Psoas muscle (tissue), 8 donors: ENCODE measurements at regions of chr7 and their contacts with region 1.

Region 1: DNA sequence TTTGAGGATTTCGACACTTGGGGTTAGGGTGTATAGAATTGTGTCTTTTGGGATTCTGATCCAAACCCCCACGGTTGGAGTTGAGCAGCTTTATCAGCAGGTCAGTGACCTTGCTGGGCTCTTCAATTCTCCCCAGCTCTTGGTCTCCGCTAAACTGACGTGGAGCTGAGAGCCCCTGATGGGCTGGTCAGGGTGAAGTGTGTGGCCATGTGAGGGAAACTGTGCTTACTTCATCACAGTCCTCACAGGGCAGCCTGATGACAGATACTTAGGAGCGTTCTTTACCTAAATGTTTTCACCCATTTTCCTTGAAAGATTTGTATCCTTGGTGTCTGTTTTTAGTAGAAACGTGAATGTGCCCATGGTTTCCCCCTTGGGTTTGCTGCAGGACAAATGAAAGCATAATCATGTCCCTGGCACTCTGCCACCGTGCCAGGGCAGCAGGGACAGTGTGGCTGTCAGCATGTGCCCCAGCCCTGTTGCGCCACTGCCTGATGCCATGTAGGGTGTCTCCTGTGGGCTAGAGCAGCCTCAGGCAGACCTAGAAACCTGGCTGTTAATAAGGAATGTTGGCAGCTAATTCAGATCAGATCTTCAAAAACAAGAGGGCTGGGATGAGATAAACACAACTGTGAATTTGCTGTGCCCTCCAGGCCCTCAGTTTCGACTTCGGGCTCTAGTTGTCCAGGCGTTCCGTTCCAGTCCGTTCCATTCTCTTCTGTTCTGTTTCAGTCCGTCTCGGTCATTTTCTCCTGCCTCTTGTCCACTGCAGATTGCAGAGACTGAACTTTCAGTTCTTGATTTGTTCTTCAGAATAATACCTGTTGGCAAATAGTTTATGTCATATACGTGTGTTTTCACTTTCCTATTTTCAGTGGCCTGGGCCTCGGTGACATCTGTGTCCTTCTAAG is 96.8 kb downstream of the TRRAP start:
- DNase-seq: peak; percentile 67 to 80
- ATAC-seq: peak; percentile 75 to 96 (median 94)
- H3K4me3 ChIP-seq: no peak overlapping the region
- H3K27ac ChIP-seq: no peak overlapping the region
- H3K4me1 ChIP-seq: no peaks in the 10 kb centered on the region
- H3K27me3 ChIP-seq: no peaks in the 10 kb centered on the region
- CTCF ChIP-seq: no peak

Region 2: DNA sequence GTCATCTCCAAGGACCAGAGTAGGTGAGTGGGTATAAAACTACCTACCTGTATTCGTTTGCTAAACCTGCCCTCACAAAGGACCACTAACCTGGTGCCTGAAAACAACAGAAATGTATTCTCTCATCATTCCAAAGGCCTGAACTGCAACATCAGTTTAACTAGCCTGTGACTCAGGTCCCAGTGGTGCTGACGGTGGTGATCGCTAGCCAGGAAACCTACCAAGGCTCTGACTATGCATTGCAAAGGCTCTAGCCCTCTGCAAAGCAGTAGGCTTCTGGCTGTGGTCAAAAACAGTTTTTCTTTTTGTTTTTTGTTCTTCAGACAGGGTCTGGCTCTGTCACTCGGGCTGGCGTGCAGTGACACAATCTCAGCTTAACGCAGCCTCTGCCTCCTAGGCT is 250.6 kb before region 1 on chr7:
- intact Hi-C with region 1: no loop called
- DNase-seq: no peak
- ATAC-seq: no peak
- H3K4me3 ChIP-seq: no peak overlapping the region
- H3K27ac ChIP-seq: no peak overlapping the region
- H3K4me1 ChIP-seq: no peaks in the 10 kb centered on the region
- H3K27me3 ChIP-seq: peaks cover 0 to 1% (median under 1%) of the 10 kb centered on the region in 3 donors
- CTCF ChIP-seq: no peak

Region 3: GRCh38 chr7:98935811-98936210 is 39.4 kb before region 1 on chr7:
- intact Hi-C with region 1: loop called in 1 of 2 experiments (anchors 5 kb)
- DNase-seq: no peak
- ATAC-seq: peak; percentile 42 to 76 (median 72)
- H3K4me3 ChIP-seq: no peak overlapping the region
- H3K27ac ChIP-seq: peak overlapping the region; percentile 33
- H3K4me1 ChIP-seq: peaks cover 4% of the 10 kb centered on the region
- H3K27me3 ChIP-seq: no peaks in the 10 kb centered on the region
- CTCF ChIP-seq: no peak

Region 4: DNA sequence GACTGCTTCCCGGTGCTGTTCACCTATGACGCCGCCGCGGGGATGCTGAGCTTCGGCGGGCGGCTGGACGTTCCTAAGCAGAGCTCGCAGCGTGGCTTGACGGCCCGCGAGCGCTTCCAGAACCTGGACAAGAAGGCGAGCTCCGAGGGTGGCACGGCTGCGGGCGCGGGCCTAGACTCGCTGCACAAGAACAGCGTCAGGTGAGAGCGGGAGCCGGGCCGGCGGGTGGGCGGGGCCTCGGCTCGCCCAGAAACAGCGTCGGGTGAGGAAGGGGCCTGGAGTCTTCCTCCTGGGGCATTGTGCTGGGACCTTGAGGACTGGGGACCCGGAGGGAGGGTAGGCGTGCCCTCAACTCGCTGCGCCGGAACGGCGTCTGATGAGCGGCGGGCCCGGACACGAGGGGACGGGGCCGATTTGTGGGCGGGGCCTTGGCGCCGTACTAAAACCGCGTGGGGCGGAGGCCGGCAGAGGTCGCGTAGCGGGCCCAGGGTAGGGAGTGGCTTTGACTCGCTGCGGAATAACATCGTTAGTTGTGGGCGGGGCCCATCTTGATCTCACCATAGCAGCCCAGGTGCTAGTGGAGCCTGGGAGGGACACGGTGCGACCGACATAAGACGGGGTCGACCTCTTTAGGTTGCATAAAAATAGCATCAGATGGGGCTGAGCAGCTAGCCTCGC is 417.7 kb after region 1 on chr7:
- intact Hi-C with region 1: no loop called
- DNase-seq: peak; percentile 81 to 90
- ATAC-seq: peak; percentile 82 to 90 (median 88)
- H3K4me3 ChIP-seq: peak overlapping the region; percentile 75
- H3K27ac ChIP-seq: peak overlapping the region; percentile 48
- H3K4me1 ChIP-seq: peaks cover 10% of the 10 kb centered on the region
- H3K27me3 ChIP-seq: no peaks in the 10 kb centered on the region
- CTCF ChIP-seq: no peak

Region 5: GRCh38 chr7:99558306-99559174 is 583.4 kb after region 1 on chr7 and contains the start of gene ZNF655:
- intact Hi-C with region 1: no loop called
- DNase-seq: peak; percentile 94 to 96
- ATAC-seq: peak; percentile 92 to 96 (median 95)
- H3K4me3 ChIP-seq: peak within 1 kb of the TSS; percentile 78
- H3K27ac ChIP-seq: peak within 1 kb of the TSS; percentile 95
- H3K4me1 ChIP-seq: peaks cover 55% of the 10 kb centered on the region
- H3K27me3 ChIP-seq: no peaks in the 10 kb centered on the region
- CTCF ChIP-seq: no peak
- total RNA-seq, gene ZNF655: 30.9 to 43.8 (median 36.6) TPM